Sigmoid colon (tissue), 7 donors: ENCODE measurements at regions of chr11 and their contacts with region 1.

Region 1: DNA sequence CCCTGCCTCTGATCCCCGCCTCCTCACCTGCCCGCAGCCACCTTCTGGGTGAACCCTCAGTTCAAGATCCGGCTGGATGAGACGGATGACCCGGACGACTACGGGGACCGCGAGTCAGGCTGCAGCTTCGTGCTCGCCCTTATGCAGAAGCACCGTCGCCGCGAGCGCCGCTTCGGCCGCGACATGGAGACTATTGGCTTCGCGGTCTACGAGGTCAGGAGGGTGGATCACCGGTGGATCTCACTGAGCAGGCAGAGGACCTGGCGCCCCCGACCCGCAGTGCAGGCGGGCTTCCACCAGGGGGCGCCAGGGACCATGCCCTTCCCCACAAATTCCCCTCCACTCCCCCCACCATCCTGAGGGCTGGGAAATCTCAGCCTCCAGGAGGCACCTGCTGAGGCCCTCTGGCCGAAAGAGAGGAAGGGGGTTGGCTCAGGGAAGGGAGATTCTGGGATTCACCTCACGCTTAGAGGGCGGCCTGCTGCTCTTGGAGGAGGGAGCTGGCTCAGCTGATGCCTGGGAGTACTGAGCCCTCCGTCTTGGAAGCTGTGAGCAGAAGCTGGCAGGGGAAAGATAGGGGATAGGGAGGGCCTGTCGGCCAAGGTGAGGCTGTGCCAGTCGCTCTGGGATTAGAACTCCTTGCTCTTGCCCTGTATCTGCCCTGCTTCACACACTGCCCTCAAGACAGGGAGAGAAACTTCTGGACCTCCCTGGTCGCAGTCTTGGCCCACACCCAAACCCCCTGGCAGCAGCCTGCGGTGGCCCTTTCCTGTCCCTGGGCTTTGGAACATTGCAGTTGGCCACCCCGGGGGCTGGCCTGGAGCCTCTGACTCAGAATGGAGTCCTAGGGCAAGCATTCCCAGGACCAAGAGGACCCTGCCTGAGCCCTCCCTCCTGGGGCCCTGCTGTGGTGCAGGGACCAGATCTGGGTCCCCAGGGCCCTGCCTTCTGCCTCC is 23.2 kb downstream of the CAPN1 start:
- DNase-seq: peak; percentile 65
- H3K4me3 ChIP-seq: no peak overlapping the region
- H3K27ac ChIP-seq: no peak overlapping the region
- H3K4me1 ChIP-seq: no peaks in the 10 kb centered on the region
- H3K27me3 ChIP-seq: no peaks in the 10 kb centered on the region
- CTCF ChIP-seq: peak; percentile 54 to 82 (median 68)
- EP300 ChIP-seq: no peak
- POLR2A ChIP-seq: no peak

Region 2: GRCh38 chr11:64723117-64723906 is 481.6 kb before region 1 on chr11 and contains the start of gene NRXN2:
- intact Hi-C with region 1: no loop called
- DNase-seq: peak; percentile 91
- H3K4me3 ChIP-seq: peak within 1 kb of the TSS; percentile 55 to 70 (median 62)
- H3K27ac ChIP-seq: peak within 1 kb of the TSS; percentile 70 to 80 (median 74)
- H3K4me1 ChIP-seq: peaks cover 0 to 7% (median 3%) of the 10 kb centered on the region in 4 donors
- H3K27me3 ChIP-seq: peaks cover 3 to 45% (median 36%) of the 10 kb centered on the region in 3 donors
- CTCF ChIP-seq: peak; percentile 95 to 99 (median 96)
- EP300 ChIP-seq: no peak
- POLR2A ChIP-seq: no peak
- total RNA-seq, gene NRXN2: 6.8 to 20.5 (median 13.7) TPM

Region 3: DNA sequence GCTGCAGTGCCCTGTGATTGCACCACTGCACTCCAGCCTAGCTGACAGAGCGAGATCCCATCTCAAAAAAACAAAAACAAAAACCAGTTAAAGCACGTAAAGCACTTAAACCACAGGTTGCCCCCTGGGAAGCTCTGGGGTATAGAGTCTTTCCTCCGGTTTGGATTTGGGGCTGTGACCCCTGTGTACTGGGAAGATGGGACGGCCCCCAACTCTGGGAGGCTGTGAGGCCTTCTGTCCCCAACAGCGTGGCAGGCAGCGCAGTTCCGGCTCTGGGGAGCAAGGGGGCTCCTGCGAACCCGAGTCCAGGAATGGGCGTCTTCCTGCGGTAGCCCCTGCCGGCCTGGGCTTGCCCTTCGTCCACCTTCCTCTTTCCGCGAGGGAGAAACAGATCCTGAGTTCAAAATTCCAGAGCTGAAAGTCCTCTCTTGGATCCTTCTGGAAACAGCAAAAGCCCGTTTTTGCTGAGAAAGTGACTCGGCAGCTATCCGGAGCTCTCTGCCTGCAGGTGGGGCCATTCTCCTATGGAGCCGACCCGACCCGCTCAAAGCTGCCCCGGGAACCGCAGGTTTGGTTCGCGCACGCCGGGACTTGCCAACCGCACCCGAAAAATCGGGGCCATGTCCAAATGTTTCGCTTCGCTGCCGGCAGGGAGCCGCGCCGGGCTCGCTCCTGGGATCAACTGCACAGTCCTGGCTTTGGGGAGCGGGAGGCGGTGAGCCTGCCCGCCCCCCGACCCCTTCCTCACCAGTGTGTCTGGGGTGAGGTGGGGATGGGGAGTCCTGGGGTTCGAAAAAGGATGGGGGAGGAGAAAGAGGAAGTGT is 20.6 kb after region 1 on chr11:
- intact Hi-C with region 1: no loop called
- DNase-seq: peak; percentile 85
- H3K4me3 ChIP-seq: peak overlapping the region; percentile 23 to 51 (median 46)
- H3K27ac ChIP-seq: peak overlapping the region; percentile 54 to 62 (median 58)
- H3K4me1 ChIP-seq: peaks cover 0 to 17% (median 13%) of the 10 kb centered on the region in 4 donors
- H3K27me3 ChIP-seq: no peaks in the 10 kb centered on the region
- CTCF ChIP-seq: peak in 3 of 4 experiments; percentile 39 to 63 (median 43)
- EP300 ChIP-seq: no peak
- POLR2A ChIP-seq: no peak

Region 4: DNA sequence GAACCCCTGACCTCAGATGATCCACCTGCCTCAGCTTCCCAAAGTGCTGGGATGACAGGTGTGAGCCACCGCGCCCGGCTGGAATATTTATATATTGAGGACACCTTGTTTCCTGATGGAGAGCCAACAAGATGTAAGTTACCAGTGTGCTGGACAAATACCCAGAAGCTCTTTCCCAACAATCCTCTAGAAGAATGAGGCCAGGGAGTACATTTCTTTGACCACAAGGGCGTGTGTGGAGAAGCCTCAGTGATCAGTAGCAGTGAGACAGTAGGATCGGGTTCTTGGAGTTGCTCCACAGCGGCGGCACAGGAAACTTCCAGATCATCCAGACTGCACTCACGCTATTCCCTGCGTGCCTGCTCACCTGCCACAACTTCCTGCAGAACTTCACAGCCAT is 46.6 kb after region 1 on chr11:
- intact Hi-C with region 1: loop called (anchors 10 kb)
- DNase-seq: no peak
- H3K4me3 ChIP-seq: no peak overlapping the region
- H3K27ac ChIP-seq: no peak overlapping the region
- H3K4me1 ChIP-seq: no peaks in the 10 kb centered on the region
- H3K27me3 ChIP-seq: no peaks in the 10 kb centered on the region
- CTCF ChIP-seq: no peak
- EP300 ChIP-seq: no peak
- POLR2A ChIP-seq: no peak